ENCODE measurements at regions of chr1 and their contacts with region 1.

Region 1: GRCh38 chr1:44826375-44827196 is 16.5 kb downstream of the PTCH2 start:
- DNase-seq: peak in 2 of 4 donors; percentile 14 to 72
- ATAC-seq: peak; percentile 38
- H3K4me3 ChIP-seq: no peak overlapping the region
- H3K27ac ChIP-seq: peak overlapping the region in 2 of 4 donors; percentile 3 to 63
- H3K4me1 ChIP-seq: no peaks in the 10 kb centered on the region
- H3K27me3 ChIP-seq: no peaks in the 10 kb centered on the region
- CTCF ChIP-seq: no peak
- POLR2A ChIP-seq: peak in 1 of 3 donors; percentile 20

Region 2: GRCh38 chr1:44792783-44793714 is 33.5 kb before region 1 on chr1:
- intact Hi-C with region 1: loop called (anchors 5 kb)
- DNase-seq: peak in 2 of 4 donors; percentile 4 to 8
- ATAC-seq: no peak
- H3K4me3 ChIP-seq: no peak overlapping the region
- H3K27ac ChIP-seq: peak overlapping the region in 1 of 4 donors; percentile 18
- H3K4me1 ChIP-seq: peaks cover 6% of the 10 kb centered on the region
- H3K27me3 ChIP-seq: no peaks in the 10 kb centered on the region
- CTCF ChIP-seq: no peak
- POLR2A ChIP-seq: no peak

Measured in body of pancreas (tissue), 4 donors.